GM12878 (cell line): ENCODE measurements at regions of chr7 and their contacts with region 1.

Region 1: DNA sequence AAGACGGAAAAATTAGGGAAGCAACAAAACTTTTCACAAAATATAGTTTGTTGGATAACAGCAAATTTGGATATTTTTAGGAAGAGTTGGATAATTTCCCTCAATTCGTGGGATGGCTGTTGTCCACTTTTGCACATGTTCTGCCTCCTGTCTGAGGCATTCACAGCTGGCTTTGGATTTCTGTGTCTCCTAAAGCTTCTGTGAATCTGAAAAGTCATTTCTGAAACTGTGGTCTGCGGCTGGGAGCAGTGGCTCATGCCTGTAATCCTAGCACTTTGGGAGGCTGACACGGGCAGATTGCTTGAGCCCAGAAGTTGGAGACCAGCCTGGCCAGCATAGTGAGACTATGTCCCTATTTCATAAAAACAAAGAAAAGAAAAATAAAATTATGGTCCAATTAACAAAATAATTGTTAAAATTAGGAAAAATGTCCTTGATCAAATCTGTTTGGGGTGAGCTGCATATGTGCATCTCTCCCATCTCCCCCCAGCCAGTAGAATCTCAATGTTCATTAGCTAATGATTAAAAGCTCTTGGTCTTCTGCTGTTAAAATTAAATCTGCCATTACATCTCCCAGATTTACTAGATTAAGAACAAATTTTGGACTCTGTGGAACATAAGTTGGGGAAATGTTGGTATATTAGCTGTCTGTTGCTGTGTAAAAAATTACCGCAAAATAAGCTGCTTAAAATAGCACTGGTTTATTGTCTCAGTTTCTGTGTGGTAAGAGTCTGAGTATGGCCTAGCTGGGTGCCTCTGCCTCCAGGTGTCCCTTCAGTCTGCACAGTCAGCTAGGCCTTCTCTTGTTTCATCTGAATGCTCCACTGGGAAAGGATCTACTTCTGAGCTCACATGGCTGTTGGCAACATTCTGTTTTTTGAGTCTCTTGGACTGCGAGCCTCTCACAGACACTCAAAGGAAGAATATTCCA is 332.0 kb upstream of the FZD1 start:
- DNase-seq: peak; percentile 73
- ATAC-seq: peak; percentile 98
- H3K4me3 ChIP-seq: no peak overlapping the region; the same call in none of the 2 replicates
- H3K27ac ChIP-seq: peak overlapping the region; percentile 54
- H3K4me1 ChIP-seq: peaks cover 22% of the 10 kb centered on the region
- H3K27me3 ChIP-seq: no peaks in the 10 kb centered on the region
- CTCF ChIP-seq: peak in 2 of 3 experiments; percentile 5 to 44; a peak in 2 of 6 replicates
- EP300 ChIP-seq: no peak; a peak in 1 of 4 replicates
- POLR2A ChIP-seq: no peak
- RAD21 ChIP-seq: peak; percentile 58

Region 2: GRCh38 chr7:90092467-90092866 is 839.8 kb before region 1 on chr7:
- CTCF ChIA-PET with region 1: no interaction called
- POLR2A ChIA-PET with region 1: no interaction called
- RAD21 ChIA-PET with region 1: no interaction called
- SMC1A ChIA-PET with region 1: no interaction called
- in situ Hi-C with region 1: no loop called
- intact Hi-C with region 1: no loop called
- DNase-seq: no peak
- ATAC-seq: no peak; the same call in 2 of the 3 replicates
- H3K4me3 ChIP-seq: no peak overlapping the region
- H3K27ac ChIP-seq: no peak overlapping the region
- H3K4me1 ChIP-seq: no peaks in the 10 kb centered on the region
- H3K27me3 ChIP-seq: no peaks in the 10 kb centered on the region
- CTCF ChIP-seq: no peak
- EP300 ChIP-seq: no peak
- POLR2A ChIP-seq: no peak
- RAD21 ChIP-seq: no peak

Region 3: DNA sequence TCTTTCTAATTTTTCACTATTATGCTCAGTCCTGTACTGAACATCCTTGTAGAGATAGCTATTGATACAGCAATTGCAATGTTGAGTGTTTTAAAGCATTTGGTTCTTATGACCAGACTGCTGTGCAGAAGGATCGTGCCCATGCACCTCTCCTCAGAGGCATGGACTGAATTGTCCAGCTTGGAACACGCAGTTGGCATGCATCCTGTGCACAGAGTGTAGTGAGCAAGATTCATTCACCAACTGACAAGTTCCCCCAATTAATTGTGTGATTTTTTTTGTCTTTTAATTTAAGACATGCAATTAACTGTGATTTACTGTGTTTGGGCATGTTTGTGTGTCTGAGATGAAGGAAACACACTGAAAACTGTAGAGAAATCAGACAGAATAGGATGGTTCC is 12.5 kb before region 1 on chr7:
- CTCF ChIA-PET with region 1: interaction called, 11 read pairs
- POLR2A ChIA-PET with region 1: interaction called, 3 read pairs
- RAD21 ChIA-PET with region 1: interaction called, 4 read pairs
- SMC1A ChIA-PET with region 1: interaction called, 16 read pairs
- in situ Hi-C with region 1: no loop called
- intact Hi-C with region 1: no loop called
- DNase-seq: no peak
- ATAC-seq: no peak
- H3K4me3 ChIP-seq: no peak overlapping the region
- H3K27ac ChIP-seq: no peak overlapping the region
- H3K4me1 ChIP-seq: no peaks in the 10 kb centered on the region
- H3K27me3 ChIP-seq: no peaks in the 10 kb centered on the region
- CTCF ChIP-seq: no peak
- EP300 ChIP-seq: no peak
- POLR2A ChIP-seq: no peak
- RAD21 ChIP-seq: no peak

Region 4: DNA sequence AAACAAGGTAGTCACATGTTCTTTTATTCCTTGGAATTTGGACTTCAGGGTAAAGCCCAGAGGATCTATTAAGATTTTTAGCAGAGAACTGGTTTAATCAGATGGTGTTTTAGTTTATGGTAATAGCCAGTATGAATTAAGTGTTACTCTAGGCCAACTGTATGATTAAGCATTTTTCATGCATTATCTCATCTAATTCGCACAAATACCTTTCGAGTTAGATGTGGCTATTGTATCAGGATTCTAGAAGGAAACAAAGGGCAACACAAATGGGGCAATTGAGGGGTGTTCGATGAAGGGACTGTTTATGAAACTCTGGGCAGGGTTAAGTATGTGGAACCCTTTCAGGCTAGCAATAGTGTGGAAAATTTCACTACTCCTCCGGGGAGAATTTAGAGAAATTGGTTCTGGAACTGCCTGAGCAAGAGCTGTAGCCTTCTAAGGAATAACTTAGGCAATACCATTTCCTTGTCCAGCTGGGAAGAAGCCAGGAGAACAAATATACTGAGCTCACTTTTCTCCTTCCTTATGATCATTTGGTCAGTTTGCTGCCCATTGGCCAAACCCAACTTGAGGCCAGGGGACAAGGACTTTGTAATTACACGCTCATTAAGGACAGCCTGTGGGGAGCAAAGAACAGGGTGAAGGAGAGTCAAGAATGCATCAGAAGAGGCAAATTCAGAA is 13.0 kb after region 1 on chr7:
- CTCF ChIA-PET with region 1: interaction called, 5 read pairs
- POLR2A ChIA-PET with region 1: interaction called, 6 read pairs
- RAD21 ChIA-PET with region 1: interaction called, 5 read pairs
- SMC1A ChIA-PET with region 1: interaction called, 37 read pairs
- in situ Hi-C with region 1: no loop called
- intact Hi-C with region 1: no loop called
- DNase-seq: no peak
- ATAC-seq: no peak
- H3K4me3 ChIP-seq: no peak overlapping the region
- H3K27ac ChIP-seq: no peak overlapping the region
- H3K4me1 ChIP-seq: peaks cover 9% of the 10 kb centered on the region; the same call in 1 of the 2 replicates
- H3K27me3 ChIP-seq: no peaks in the 10 kb centered on the region
- CTCF ChIP-seq: no peak
- EP300 ChIP-seq: no peak
- POLR2A ChIP-seq: no peak
- RAD21 ChIP-seq: no peak